WTC11 (cell line): ENCODE measurements at regions of chr5 and their contacts with region 1.

Region 1: DNA sequence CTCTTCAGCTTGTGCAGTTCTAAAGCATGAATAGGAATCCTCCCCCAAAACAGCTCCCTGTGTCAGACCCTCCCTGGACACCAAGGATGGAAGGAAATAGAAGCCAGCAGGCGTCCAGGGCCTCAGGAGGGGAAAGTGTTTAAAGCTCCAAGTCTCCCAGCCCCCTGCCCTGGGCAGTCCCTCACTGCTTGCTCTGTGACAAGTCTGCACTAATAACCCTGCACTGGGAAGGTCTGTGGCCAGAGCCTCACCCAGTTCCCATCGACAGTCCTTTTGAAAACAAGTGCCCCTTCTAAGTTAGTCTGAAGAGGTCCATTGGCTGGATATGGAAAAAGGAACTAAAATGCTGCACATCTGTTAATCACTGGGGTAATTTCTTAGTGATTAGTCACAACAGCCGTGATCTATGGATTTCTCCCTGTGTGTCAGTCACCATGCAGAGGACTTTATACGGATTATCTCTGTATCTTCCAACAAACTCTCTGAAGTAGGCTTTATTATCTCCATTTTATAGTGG is 195.3 kb downstream of the FBXL7 start:
- DNase-seq: no peak
- ATAC-seq: peak; percentile 59
- H3K4me3 Mint-ChIP-seq: no peak overlapping the region
- H3K27ac Mint-ChIP-seq: no peak overlapping the region
- H3K4me1 Mint-ChIP-seq: peaks cover 42% of the 10 kb centered on the region
- H3K27me3 Mint-ChIP-seq: no peaks in the 10 kb centered on the region
- CTCF ChIP-seq: no peak

Region 2: GRCh38 chr5:15683332-15683731 is 11.9 kb before region 1 on chr5:
- CTCF ChIA-PET with region 1: interaction called, 10 read pairs
- POLR2A ChIA-PET with region 1: no interaction called
- DNase-seq: peak; percentile 73
- ATAC-seq: peak; percentile 100
- H3K4me3 Mint-ChIP-seq: no peak overlapping the region
- H3K27ac Mint-ChIP-seq: no peak overlapping the region
- H3K4me1 Mint-ChIP-seq: peaks cover 48% of the 10 kb centered on the region
- H3K27me3 Mint-ChIP-seq: no peaks in the 10 kb centered on the region
- CTCF ChIP-seq: peak; percentile 61

Region 3: DNA sequence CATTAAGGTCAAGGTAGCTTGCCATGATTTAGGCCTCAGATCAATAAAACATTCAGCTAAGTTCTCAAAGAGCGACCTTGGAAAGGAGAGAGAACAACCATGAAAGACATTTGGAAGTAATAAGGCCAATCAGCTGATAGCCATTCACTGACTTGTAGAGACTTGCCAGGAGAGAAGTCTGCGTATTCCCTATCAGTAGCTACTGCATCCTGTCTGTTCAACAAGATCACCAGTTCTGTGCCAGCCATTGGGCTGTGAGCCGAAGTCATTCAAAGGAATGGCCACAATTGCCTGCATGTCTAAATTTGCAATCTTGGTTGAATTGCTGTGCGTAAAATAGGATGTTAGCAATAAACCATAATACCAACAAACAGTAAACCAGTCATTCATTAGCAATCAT is 24.5 kb after region 1 on chr5:
- CTCF ChIA-PET with region 1: no interaction called
- POLR2A ChIA-PET with region 1: no interaction called
- DNase-seq: no peak
- ATAC-seq: peak; percentile 75
- H3K4me3 Mint-ChIP-seq: no peak overlapping the region
- H3K27ac Mint-ChIP-seq: peak overlapping the region; percentile 81
- H3K4me1 Mint-ChIP-seq: peaks cover 56% of the 10 kb centered on the region
- H3K27me3 Mint-ChIP-seq: no peaks in the 10 kb centered on the region
- CTCF ChIP-seq: no peak